ENCODE measurements at regions of chr2 and their contacts with region 1.

Region 1: GRCh38 chr2:208334230-208334629 is 68.2 kb downstream of the PIKFYVE start:
- H3K4me3 Mint-ChIP-seq: no peak overlapping the region
- H3K27ac Mint-ChIP-seq: no peak overlapping the region
- H3K4me1 Mint-ChIP-seq: no peaks in the 10 kb centered on the region
- H3K27me3 Mint-ChIP-seq: no peaks in the 10 kb centered on the region

Region 2: DNA sequence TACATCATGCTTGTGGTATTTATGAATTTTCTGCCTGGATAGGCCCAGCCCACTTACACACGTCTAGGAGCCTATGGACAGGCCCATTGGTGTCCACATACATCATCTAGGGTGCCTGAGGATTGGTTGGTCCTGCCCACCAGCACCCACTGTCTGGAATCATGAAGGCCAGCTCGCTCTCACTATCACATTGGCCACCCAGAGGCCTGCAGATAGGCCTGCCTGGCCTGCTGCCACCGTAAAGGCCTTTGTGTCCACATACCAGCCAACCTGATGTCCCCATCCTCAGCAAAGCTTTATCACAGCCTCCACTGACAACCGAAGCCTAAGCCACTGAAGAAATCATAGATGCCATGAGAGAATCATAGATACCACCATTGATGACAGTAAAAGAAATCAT is 749.3 kb before region 1 on chr2:
- intact Hi-C with region 1: loop called (anchors 10 kb)
- H3K4me3 Mint-ChIP-seq: no peak overlapping the region
- H3K27ac Mint-ChIP-seq: no peak overlapping the region
- H3K4me1 Mint-ChIP-seq: peaks cover 14% of the 10 kb centered on the region
- H3K27me3 Mint-ChIP-seq: no peaks in the 10 kb centered on the region

Region 3: GRCh38 chr2:208300847-208301618 is 33.2 kb before region 1 on chr2:
- intact Hi-C with region 1: loop called (anchors 5 kb)
- H3K4me3 Mint-ChIP-seq: no peak overlapping the region
- H3K27ac Mint-ChIP-seq: no peak overlapping the region
- H3K4me1 Mint-ChIP-seq: peaks cover 9% of the 10 kb centered on the region
- H3K27me3 Mint-ChIP-seq: no peaks in the 10 kb centered on the region

Region 4: GRCh38 chr2:210328666-210329065 is 1994.4 kb after region 1 on chr2:
- intact Hi-C with region 1: no loop called
- H3K4me3 Mint-ChIP-seq: no peak overlapping the region
- H3K27ac Mint-ChIP-seq: no peak overlapping the region
- H3K4me1 Mint-ChIP-seq: no peaks in the 10 kb centered on the region
- H3K27me3 Mint-ChIP-seq: no peaks in the 10 kb centered on the region